ENCODE measurements at regions of chr6 and their contacts with region 1.

Region 1: GRCh38 chr6:38493931-38494547 is 145.7 kb downstream of the BTBD9 start:
- DNase-seq: peak; percentile 34 to 70
- ATAC-seq: peak in 2 of 8 donors; percentile 42 to 43
- H3K4me3 ChIP-seq: no peak overlapping the region
- H3K27ac ChIP-seq: no peak overlapping the region
- H3K4me1 ChIP-seq: peaks cover 0 to 12% (median 0%) of the 10 kb centered on the region in 9 donors
- H3K27me3 ChIP-seq: no peaks in the 10 kb centered on the region
- CTCF ChIP-seq: peak; percentile 91 to 98 (median 94)

Region 2: GRCh38 chr6:37705239-37706051 is 788.6 kb before region 1 on chr6:
- intact Hi-C with region 1: loop called in 7 of 10 experiments (anchors 5 to 10 kb)
- DNase-seq: peak; percentile 81 to 86
- ATAC-seq: peak; percentile 89 to 96 (median 93)
- H3K4me3 ChIP-seq: peak overlapping the region; percentile 27 to 61 (median 56)
- H3K27ac ChIP-seq: peak overlapping the region; percentile 37 to 82 (median 72)
- H3K4me1 ChIP-seq: peaks cover 0 to 19% (median 6%) of the 10 kb centered on the region in 9 donors
- H3K27me3 ChIP-seq: peaks cover 0 to 48% (median 0%) of the 10 kb centered on the region in 7 donors
- CTCF ChIP-seq: peak; percentile 38 to 82 (median 72)

Region 3: GRCh38 chr6:37783856-37784584 is 710.0 kb before region 1 on chr6:
- intact Hi-C with region 1: loop called in 4 of 10 experiments (anchors 5 to 10 kb)
- DNase-seq: peak in 1 of 2 donors; percentile 24
- ATAC-seq: peak; percentile 53 to 82 (median 71)
- H3K4me3 ChIP-seq: peak overlapping the region; percentile 26 to 70 (median 54)
- H3K27ac ChIP-seq: peak overlapping the region in 5 of 10 donors; percentile 12 to 25 (median 22)
- H3K4me1 ChIP-seq: peaks cover 0 to 27% (median 19%) of the 10 kb centered on the region in 9 donors
- H3K27me3 ChIP-seq: peaks cover 0 to 32% (median 0%) of the 10 kb centered on the region in 7 donors
- CTCF ChIP-seq: peak in 4 of 9 donors; percentile 11 to 35 (median 32)

Region 4: GRCh38 chr6:38034274-38034914 is 459.6 kb before region 1 on chr6:
- intact Hi-C with region 1: loop called in 9 of 10 experiments (anchors 5 to 10 kb)
- DNase-seq: no peak
- ATAC-seq: no peak
- H3K4me3 ChIP-seq: no peak overlapping the region
- H3K27ac ChIP-seq: no peak overlapping the region
- H3K4me1 ChIP-seq: peaks cover 0 to 47% (median 23%) of the 10 kb centered on the region in 9 donors
- H3K27me3 ChIP-seq: no peaks in the 10 kb centered on the region
- CTCF ChIP-seq: peak in 8 of 9 donors; percentile 13 to 70 (median 56)

Region 5: GRCh38 chr6:38039502-38039901 is 454.5 kb before region 1 on chr6:
- intact Hi-C with region 1: loop called in 9 of 10 experiments (anchors 5 to 10 kb)
- DNase-seq: no peak
- ATAC-seq: no peak
- H3K4me3 ChIP-seq: no peak overlapping the region
- H3K27ac ChIP-seq: no peak overlapping the region
- H3K4me1 ChIP-seq: peaks cover 0 to 40% (median 13%) of the 10 kb centered on the region in 9 donors
- H3K27me3 ChIP-seq: no peaks in the 10 kb centered on the region
- CTCF ChIP-seq: no peak

Region 6: DNA sequence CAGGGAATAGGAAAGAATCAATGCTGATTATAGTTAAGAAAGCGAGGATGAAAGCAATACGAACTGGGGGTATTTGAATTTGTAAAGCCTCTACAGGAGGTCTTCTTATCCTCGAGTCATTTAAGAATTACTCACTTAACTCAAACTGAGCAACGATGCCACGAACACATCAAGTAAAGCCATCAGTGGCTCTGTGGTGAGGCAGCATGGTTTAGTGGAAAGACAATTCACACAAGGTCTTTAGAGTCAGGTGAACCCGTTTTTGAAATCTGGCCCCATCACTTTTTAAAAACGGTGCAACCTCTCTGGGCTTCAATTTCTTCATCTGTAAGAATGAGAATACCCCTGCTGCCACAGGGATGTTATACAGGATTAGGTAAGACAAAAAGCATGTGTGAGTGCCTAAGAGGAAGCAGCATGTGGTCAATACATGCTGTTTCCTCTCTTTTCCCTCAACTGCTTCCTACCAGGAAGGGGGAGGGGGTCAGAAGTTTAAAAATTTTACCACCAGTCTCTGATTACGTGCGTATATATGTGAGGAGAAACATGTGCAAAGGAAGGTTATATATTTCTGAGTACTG is 16.3 kb before region 1 on chr6:
- intact Hi-C with region 1: no loop called
- DNase-seq: no peak
- ATAC-seq: no peak
- H3K4me3 ChIP-seq: no peak overlapping the region
- H3K27ac ChIP-seq: no peak overlapping the region
- H3K4me1 ChIP-seq: peaks cover 0 to 30% (median 0%) of the 10 kb centered on the region in 9 donors
- H3K27me3 ChIP-seq: no peaks in the 10 kb centered on the region
- CTCF ChIP-seq: no peak

Region 7: GRCh38 chr6:38671885-38672467 is 177.9 kb after region 1 on chr6:
- intact Hi-C with region 1: loop called in 1 of 10 experiments (anchors 10 kb)
- DNase-seq: peak in 1 of 2 donors; percentile 14
- ATAC-seq: peak in 3 of 8 donors; percentile 54 to 62 (median 58)
- H3K4me3 ChIP-seq: no peak overlapping the region
- H3K27ac ChIP-seq: no peak overlapping the region
- H3K4me1 ChIP-seq: no peaks in the 10 kb centered on the region
- H3K27me3 ChIP-seq: no peaks in the 10 kb centered on the region
- CTCF ChIP-seq: peak; percentile 35 to 81 (median 75)